Activated CD4-positive, alpha-beta T cell treated with anti-CD3 and anti-CD28 coated beads, Interleukin-2, amount 10 ng/mL, durations not matched to agents 24 days and 14 days (primary cell): ENCODE measurements at regions of chr10 and their contacts with region 1.

Region 1: DNA sequence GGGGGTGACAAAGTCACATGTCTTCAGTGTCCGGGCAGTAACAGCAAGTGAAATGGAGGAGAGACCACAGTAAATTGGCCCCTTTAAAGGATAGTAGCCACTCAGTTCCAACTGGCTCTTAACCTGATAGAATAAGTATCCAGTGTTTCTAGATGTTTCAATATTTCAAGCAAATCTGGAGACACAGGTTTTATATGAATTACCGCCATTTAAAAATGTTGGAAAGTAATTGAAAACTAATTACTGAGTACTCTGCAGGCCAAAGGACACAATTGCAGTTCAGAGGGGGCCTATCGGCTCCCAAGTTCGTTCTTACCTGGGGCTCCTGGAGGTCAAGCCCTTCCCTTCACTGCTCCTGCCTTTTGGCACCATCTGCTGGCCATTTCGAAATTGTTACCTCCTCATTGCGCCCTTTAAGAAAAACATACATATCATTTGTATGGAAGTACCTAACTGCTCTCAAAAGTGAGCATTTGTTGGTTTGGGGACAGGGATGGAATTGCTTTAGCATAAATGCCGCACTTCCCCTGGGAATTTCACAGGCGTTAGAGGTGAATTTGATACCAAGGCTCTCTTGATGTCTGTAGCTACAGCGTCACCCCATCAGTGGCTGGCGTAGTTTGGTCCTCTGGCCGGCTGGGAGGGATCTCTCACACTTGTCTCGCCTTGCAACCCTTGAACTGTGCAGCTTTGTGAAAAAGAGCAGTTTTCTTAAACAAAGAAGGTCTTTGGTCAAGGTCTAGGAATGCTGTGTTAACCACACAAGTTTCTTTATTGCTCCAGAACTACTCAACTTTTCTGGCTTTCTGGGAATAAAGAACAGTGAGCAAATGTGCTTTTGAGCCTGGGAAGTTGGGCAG is 220.0 kb downstream of the ARHGAP21 start:
- DNase-seq: peak; percentile 78
- H3K4me3 Mint-ChIP-seq: no peak overlapping the region
- H3K27ac Mint-ChIP-seq: no peak overlapping the region
- H3K4me1 Mint-ChIP-seq: no peaks in the 10 kb centered on the region
- H3K27me3 Mint-ChIP-seq: no peaks in the 10 kb centered on the region

Region 2: GRCh38 chr10:24360282-24361127 is 143.2 kb before region 1 on chr10:
- intact Hi-C with region 1: loop called (anchors 1 kb)
- DNase-seq: peak; percentile 76
- H3K4me3 Mint-ChIP-seq: no peak overlapping the region
- H3K27ac Mint-ChIP-seq: no peak overlapping the region
- H3K4me1 Mint-ChIP-seq: no peaks in the 10 kb centered on the region
- H3K27me3 Mint-ChIP-seq: no peaks in the 10 kb centered on the region

Region 3: GRCh38 chr10:24378126-24378920 is 125.4 kb before region 1 on chr10:
- intact Hi-C with region 1: loop called (anchors 5 kb)
- DNase-seq: no peak
- H3K4me3 Mint-ChIP-seq: no peak overlapping the region
- H3K27ac Mint-ChIP-seq: no peak overlapping the region
- H3K4me1 Mint-ChIP-seq: peaks cover 16% of the 10 kb centered on the region
- H3K27me3 Mint-ChIP-seq: peaks cover 5% of the 10 kb centered on the region